ENCODE measurements at regions of chr9 and their contacts with region 1.

Region 1: DNA sequence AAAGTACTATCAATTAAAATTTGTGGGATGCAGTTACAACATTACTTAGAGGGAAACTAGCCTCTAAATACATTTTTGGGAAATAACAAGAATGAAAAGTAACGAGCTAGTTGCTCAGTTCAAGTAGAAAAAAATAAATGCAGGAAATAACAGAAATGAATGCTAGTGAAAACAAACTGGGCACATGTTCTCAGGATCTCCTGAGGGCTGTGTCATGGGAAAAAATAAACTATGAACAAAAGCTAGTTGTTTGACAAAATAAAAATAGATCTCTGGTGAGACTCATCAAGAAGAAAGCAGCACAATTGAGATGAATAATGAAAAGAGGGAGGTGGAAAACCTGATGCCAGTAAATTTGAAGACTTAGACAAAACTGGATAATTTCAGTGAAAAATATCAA is 16.3 kb downstream of the IDNK start:
- DNase-seq: no peak
- ATAC-seq: no peak
- H3K4me3 Mint-ChIP-seq: no peak overlapping the region
- H3K27ac Mint-ChIP-seq: no peak overlapping the region
- H3K4me1 Mint-ChIP-seq: no peaks in the 10 kb centered on the region
- H3K27me3 Mint-ChIP-seq: no peaks in the 10 kb centered on the region

Region 2: DNA sequence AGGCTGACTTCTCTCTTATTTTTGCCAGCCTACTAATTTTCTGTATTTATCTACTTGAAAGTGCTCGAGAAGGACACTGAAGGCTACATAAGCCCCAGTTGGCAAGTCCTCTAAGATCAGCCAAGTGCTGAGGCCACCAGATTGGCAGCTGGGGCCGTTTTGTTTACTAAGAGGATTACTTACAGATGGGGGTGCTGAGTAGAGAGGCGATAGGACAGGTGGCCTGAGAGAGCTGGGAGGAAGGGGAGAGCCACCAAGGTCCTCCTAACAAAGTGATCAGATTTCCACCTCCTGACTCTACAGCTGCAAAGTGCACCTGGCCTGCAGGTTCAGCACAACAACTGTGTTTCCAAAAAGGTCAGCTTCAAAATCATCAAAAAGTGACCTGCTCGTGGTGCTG is 134.0 kb before region 1 on chr9:
- CTCF ChIA-PET with region 1: no interaction called
- POLR2A ChIA-PET with region 1: no interaction called
- DNase-seq: no peak
- ATAC-seq: no peak
- H3K4me3 Mint-ChIP-seq: no peak overlapping the region
- H3K27ac Mint-ChIP-seq: no peak overlapping the region
- H3K4me1 Mint-ChIP-seq: peaks cover 13% of the 10 kb centered on the region
- H3K27me3 Mint-ChIP-seq: no peaks in the 10 kb centered on the region

Region 3: DNA sequence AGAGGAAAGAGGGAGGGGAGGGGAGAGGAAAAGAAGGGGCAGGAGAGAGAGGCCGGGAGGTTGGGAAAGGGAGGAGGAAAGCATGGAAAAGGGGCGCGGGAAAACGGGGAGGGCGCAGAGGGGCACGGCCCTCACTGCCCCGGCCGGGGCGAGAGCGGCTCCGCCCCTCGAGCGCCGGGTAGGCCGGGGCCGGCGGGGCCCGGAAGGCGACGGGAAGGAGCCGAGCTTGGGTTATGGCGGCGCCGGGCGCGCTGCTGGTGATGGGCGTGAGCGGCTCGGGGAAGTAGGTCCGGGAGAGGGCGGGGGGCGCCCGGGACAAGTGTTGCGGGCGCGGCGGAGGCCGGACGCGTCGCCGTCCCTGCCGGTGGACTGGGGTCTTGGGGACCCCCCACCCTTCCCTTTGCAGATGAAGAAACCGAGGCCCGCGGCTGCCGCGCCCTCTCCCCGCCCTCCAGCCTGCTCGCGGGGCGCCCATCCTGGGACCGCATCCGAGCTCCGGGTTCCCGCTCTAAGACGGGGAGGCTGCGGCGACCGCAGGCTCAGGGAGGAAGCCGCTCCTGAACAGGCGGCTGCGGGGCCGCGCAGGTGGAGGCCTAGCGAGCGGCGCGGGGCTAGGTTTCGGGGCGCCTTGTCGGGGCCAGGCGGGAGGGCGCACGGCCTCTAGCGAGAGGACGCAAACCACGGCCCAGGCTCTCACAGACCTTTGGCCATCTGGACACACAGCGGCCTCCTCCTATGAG is 16.2 kb before region 1 on chr9 and contains the start of gene IDNK:
- CTCF ChIA-PET with region 1: interaction called, 11 read pairs
- POLR2A ChIA-PET with region 1: interaction called, 9 read pairs
- DNase-seq: peak; percentile 67
- ATAC-seq: peak; percentile 93
- H3K4me3 Mint-ChIP-seq: peak within 1 kb of the TSS; percentile 85
- H3K27ac Mint-ChIP-seq: peak within 1 kb of the TSS; percentile 95
- H3K4me1 Mint-ChIP-seq: peaks cover 32% of the 10 kb centered on the region
- H3K27me3 Mint-ChIP-seq: peaks cover 8% of the 10 kb centered on the region
- total RNA-seq, gene IDNK: 5.4 to 6.8 TPM

Measured in activated CD8-positive, alpha-beta T cell treated with anti-CD3 and anti-CD28 coated beads, Interleukin-2, amount 10 ng/mL, durations not matched to agents 7 days and 5 days (primary cell).